Lower leg skin (tissue), 4 donors: ENCODE measurements at regions of chr12 and their contacts with region 1.

Region 1: GRCh38 chr12:53289891-53290290 is 5.5 kb upstream of the PFDN5 start:
- DNase-seq: no peak
- H3K4me3 ChIP-seq: no peak overlapping the region
- CTCF ChIP-seq: no peak
- POLR2A ChIP-seq: no peak

Region 2: DNA sequence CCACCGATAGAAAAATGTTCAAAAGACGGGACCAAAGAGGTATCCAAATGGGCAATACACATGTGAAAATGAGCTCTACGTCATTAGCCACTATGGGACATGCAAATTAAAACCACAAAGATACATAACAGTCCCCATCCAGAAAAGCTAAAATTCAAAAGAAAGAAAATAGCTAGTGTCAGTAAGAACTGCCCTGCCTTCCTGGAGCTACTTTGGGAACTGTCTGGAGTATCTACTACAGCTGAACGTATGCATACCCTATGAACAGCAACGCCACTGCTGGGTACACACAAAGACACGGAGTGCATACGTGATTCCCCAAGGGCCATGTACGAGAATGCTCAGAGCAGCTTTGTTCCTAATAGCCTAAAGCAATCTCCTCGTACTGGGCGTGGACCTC is 560.7 kb before region 1 on chr12:
- intact Hi-C with region 1: no loop called
- DNase-seq: no peak
- H3K4me3 ChIP-seq: no peak overlapping the region
- CTCF ChIP-seq: no peak
- POLR2A ChIP-seq: no peak

Region 3: DNA sequence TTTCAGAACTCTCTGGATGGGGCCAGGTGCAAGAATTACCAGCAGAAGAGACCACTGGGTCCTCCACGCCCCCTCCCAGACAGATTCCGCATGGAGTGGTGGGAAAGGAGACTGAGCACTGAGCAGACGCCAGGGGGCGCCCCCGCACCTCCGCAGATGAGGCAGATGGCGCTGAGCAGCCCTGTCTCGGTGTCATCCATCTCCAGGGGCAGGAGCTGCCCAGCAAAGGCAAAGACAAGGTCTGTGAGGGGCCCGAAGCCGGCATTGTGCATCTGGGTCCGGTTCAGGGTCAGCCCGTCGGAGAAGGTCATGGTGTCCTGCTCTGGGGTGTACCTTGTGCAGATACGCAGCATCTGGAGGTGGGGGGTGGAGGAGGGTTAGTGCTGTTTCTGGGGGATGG is 76.5 kb before region 1 on chr12:
- intact Hi-C with region 1: loop called (anchors 5 kb)
- DNase-seq: peak in 1 of 2 donors; percentile 96
- H3K4me3 ChIP-seq: no peak overlapping the region
- CTCF ChIP-seq: peak in 1 of 3 donors; percentile 92
- POLR2A ChIP-seq: no peak